Natural killer cell (primary cell): ENCODE measurements at regions of chr12 and their contacts with region 1.

Region 1: DNA sequence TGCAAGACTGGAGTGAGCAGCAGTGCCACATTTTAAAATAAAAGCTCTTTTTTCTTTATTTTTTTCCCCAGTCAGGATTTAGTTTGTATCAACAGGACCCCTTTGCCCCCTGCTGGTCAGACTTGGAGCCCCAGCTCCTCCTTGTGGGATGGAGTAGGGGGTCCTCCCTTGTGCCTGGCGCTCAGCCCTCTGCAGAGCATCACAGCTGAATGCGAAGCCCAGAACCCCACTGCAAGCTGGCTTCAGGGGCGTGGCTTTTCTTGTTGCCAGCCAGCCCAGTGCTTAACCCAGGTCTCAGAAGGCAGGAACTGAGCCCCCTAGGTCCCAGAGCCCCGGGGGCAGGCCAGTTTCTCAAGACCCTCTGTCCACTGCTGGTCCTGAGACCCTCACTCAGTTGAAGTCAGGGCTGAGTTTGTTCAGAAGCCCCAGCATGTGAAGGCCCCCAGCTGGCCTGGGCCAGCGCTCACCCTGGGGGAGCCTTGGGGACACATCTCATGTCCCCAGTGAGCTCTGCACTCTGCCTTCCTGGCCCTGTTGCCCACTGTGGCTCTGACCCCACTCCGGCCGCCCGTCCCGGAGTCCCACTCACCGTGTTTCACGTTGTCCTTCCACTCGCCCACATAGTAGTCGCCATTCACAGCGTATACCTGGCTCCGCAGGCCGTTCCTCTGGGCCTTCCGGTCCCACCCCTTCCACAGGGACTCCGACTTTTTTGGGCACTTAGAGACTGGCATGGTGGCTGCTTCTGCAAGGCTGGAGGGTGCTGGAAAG is 519 bp downstream of the MORN3 start:
- DNase-seq: peak; percentile 47 to 79
- ATAC-seq: no peak
- H3K4me3 ChIP-seq: no peak overlapping the region
- H3K4me3 Mint-ChIP-seq: no peak overlapping the region
- H3K27ac ChIP-seq: no peak overlapping the region
- H3K27ac Mint-ChIP-seq: peak overlapping the region in 1 of 2 donors; percentile 79
- H3K4me1 ChIP-seq: peaks cover 51% of the 10 kb centered on the region
- H3K4me1 Mint-ChIP-seq: peaks cover 27 to 57% of the 10 kb centered on the region in 2 donors
- H3K27me3 ChIP-seq: no peaks in the 10 kb centered on the region
- H3K27me3 Mint-ChIP-seq: no peaks in the 10 kb centered on the region
- CTCF ChIP-seq: peak; percentile 68

Region 2: DNA sequence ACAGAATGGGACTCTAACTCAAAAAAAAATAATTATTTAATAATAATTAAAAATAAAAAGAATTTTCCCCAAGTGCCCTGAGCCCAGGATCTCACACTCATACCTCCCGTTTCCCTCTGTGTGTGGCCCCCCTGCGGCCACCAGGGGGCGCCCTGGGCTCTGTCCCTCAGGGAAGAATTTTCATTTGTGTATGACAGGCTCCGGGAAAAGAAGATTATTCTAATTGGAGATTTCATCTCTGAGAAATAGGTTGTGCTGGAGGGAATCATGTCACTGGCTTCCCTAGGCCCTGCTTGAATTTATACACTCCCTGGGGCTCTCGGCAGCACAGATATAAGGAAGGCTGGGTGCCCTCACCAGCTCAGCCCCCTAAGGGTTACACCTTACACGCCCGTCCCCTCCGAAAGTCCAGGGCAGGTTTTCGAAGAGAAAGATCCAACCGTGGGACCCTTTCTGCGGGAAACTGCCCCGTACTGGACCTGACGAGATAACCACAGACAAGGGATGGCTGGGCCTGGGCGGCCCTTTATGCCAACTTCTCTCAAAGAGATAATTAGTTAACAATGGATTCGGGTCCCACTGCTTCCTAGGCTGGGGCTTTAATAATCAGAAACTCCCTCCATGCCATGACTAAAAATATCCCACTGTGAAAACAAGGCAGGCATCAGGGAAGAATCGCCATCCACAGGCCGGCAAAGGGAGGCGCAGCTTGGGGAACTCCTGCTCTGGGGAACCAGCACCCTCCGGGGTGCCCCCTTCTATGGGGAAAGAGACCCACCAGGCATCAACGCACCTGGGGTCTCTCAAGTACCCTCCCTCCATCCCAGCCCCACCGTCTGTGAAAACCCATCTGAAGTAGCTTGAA is 168.8 kb before region 1 on chr12:
- intact Hi-C with region 1: loop called (anchors 1 kb)
- DNase-seq: peak; percentile 76 to 87
- ATAC-seq: peak; percentile 74 to 78 (median 75)
- H3K4me3 ChIP-seq: no peak overlapping the region
- H3K4me3 Mint-ChIP-seq: no peak overlapping the region
- H3K27ac ChIP-seq: no peak overlapping the region
- H3K27ac Mint-ChIP-seq: peak overlapping the region in 1 of 2 donors; percentile 59
- H3K4me1 ChIP-seq: peaks cover 57% of the 10 kb centered on the region
- H3K4me1 Mint-ChIP-seq: peaks cover 17 to 36% of the 10 kb centered on the region in 2 donors
- H3K27me3 ChIP-seq: no peaks in the 10 kb centered on the region
- H3K27me3 Mint-ChIP-seq: no peaks in the 10 kb centered on the region
- CTCF ChIP-seq: peak; percentile 98

Region 3: GRCh38 chr12:121590476-121591143 is 78.3 kb before region 1 on chr12:
- intact Hi-C with region 1: loop called (anchors 1 kb)
- DNase-seq: peak; percentile 63 to 89
- ATAC-seq: peak; percentile 74 to 84 (median 78)
- H3K4me3 ChIP-seq: peak overlapping the region; percentile 37
- H3K4me3 Mint-ChIP-seq: peak overlapping the region; percentile 89
- H3K27ac ChIP-seq: peak overlapping the region; percentile 98
- H3K27ac Mint-ChIP-seq: peak overlapping the region; percentile 95 to 99
- H3K4me1 ChIP-seq: peaks cover 39% of the 10 kb centered on the region
- H3K4me1 Mint-ChIP-seq: peaks cover 32 to 37% of the 10 kb centered on the region in 2 donors
- H3K27me3 ChIP-seq: no peaks in the 10 kb centered on the region
- H3K27me3 Mint-ChIP-seq: no peaks in the 10 kb centered on the region
- CTCF ChIP-seq: no peak

Region 4: GRCh38 chr12:121688966-121689365 is 20.0 kb after region 1 on chr12:
- intact Hi-C with region 1: loop called (anchors 2 kb)
- DNase-seq: no peak
- ATAC-seq: no peak
- H3K4me3 ChIP-seq: no peak overlapping the region
- H3K4me3 Mint-ChIP-seq: no peak overlapping the region
- H3K27ac ChIP-seq: no peak overlapping the region
- H3K27ac Mint-ChIP-seq: peak overlapping the region in 1 of 2 donors; percentile 18
- H3K4me1 ChIP-seq: peaks cover 10% of the 10 kb centered on the region
- H3K4me1 Mint-ChIP-seq: peaks cover 5 to 6% of the 10 kb centered on the region in 2 donors
- H3K27me3 ChIP-seq: no peaks in the 10 kb centered on the region
- H3K27me3 Mint-ChIP-seq: no peaks in the 10 kb centered on the region
- CTCF ChIP-seq: no peak

Region 5: GRCh38 chr12:121701667-121702277 is 32.8 kb after region 1 on chr12:
- intact Hi-C with region 1: no loop called
- DNase-seq: no peak
- ATAC-seq: no peak
- H3K4me3 ChIP-seq: no peak overlapping the region
- H3K4me3 Mint-ChIP-seq: no peak overlapping the region
- H3K27ac ChIP-seq: no peak overlapping the region
- H3K27ac Mint-ChIP-seq: no peak overlapping the region
- H3K4me1 ChIP-seq: no peaks in the 10 kb centered on the region
- H3K4me1 Mint-ChIP-seq: no peaks in the 10 kb centered on the region
- H3K27me3 ChIP-seq: no peaks in the 10 kb centered on the region
- H3K27me3 Mint-ChIP-seq: peaks cover 0 to 3% of the 10 kb centered on the region in 2 donors
- CTCF ChIP-seq: no peak